Left colon (tissue), 2 donors: ENCODE measurements at regions of chr21 and their contacts with region 1.

Region 1: GRCh38 chr21:41520575-41521442 is 12.9 kb upstream of the TMPRSS2 start:
- DNase-seq: no peak
- ATAC-seq: peak; percentile 30

Region 2: DNA sequence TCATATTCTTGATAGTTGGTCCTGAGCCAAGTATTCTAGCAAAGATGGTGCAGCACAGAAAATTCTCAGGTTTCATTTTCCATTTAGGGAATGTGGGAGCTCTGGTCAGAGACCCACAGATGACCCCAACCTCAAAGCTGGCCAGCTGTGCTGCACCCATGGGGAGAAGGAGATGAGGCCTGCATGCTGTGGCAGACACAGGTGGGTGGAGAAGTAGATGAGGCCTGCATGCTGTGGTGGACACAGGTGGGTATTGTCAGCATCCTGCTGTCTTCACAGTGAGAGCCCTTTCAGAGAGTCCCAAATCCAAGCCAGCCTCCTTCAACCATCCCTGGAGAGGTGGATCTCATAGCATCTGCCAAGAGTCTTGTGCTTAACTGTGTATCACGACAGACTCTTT is 751.6 kb before region 1 on chr21:
- intact Hi-C with region 1: no loop called
- DNase-seq: no peak
- ATAC-seq: no peak

Region 3: DNA sequence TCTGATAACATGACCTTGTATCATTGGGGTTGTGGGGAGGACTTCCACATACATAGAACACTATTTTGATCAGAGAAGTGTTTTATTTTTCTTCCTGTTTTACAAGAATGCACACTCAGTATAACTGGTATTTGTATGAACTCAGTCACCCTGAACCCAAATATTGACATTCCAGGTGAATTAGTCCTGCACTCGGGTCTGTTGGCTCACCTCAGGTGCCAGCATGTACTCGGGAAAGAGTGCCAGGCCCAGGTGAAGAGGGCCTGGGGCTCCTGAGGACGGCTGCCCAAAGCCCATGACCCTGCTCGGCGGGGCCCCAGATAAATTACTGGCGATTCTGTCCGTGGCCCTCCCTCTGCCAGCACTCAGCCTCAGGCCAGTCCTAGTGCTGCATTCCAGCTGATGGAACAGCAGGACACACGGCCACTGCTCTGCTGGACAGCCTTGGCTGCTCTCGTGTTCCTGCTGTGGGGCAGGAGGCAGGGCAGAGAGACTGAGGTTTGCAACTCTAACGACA is 62.5 kb after region 1 on chr21:
- intact Hi-C with region 1: loop called in 1 of 2 experiments (anchors 10 kb)
- DNase-seq: peak in 1 of 2 donors; percentile 17
- ATAC-seq: no peak